ENCODE measurements at regions of chr10 and their contacts with region 1.

Region 1: DNA sequence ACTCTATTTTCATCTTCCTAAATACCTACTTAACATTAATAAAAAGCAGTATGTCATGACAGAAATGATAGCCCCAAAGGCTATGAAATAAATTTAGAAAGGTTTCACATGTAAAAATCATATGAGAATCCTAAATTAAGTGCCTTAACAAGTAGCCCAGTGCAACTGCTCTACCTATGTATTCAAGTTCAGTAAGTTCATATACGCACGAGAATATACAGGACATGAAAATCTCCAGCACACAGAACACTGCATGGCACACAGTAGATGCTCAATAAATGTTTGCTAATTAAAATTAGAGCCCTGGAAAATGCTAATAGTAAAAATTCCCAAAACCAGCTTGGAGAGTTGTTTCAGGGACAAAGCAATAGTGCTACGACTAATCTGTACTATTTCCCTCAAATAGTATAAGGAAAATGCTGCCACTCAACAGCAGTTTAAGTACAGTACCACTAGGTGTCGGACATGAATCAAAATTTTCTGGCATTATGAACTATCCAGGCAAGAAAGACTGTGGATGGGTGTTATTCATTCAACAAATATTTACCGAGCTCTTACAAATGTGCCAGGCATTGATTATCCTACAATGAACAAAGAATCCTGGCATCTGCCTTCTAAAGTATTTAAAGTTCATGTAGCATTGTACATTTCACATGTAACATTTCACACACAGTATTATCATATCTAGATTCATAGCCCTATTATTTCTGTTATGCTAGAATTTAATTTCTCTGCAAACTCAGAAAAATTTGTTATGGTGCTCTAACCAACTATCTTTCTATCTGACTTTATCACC is 80.9 kb downstream of the ARHGAP21 start:
- DNase-seq: no peak
- H3K4me3 ChIP-seq: no peak overlapping the region
- H3K27ac ChIP-seq: no peak overlapping the region
- H3K4me1 ChIP-seq: peaks cover 0 to 9% (median 0%) of the 10 kb centered on the region in 3 donors
- H3K27me3 ChIP-seq: no peaks in the 10 kb centered on the region
- CTCF ChIP-seq: peak; percentile 64 to 88 (median 74)
- POLR2A ChIP-seq: no peak

Region 2: GRCh38 chr10:24718031-24718855 is 75.4 kb after region 1 on chr10:
- intact Hi-C with region 1: loop called (anchors 10 kb)
- DNase-seq: no peak
- H3K4me3 ChIP-seq: no peak overlapping the region
- H3K27ac ChIP-seq: no peak overlapping the region
- H3K4me1 ChIP-seq: peaks cover 0 to 71% (median 29%) of the 10 kb centered on the region in 3 donors
- H3K27me3 ChIP-seq: no peaks in the 10 kb centered on the region
- CTCF ChIP-seq: no peak
- POLR2A ChIP-seq: no peak

Region 3: DNA sequence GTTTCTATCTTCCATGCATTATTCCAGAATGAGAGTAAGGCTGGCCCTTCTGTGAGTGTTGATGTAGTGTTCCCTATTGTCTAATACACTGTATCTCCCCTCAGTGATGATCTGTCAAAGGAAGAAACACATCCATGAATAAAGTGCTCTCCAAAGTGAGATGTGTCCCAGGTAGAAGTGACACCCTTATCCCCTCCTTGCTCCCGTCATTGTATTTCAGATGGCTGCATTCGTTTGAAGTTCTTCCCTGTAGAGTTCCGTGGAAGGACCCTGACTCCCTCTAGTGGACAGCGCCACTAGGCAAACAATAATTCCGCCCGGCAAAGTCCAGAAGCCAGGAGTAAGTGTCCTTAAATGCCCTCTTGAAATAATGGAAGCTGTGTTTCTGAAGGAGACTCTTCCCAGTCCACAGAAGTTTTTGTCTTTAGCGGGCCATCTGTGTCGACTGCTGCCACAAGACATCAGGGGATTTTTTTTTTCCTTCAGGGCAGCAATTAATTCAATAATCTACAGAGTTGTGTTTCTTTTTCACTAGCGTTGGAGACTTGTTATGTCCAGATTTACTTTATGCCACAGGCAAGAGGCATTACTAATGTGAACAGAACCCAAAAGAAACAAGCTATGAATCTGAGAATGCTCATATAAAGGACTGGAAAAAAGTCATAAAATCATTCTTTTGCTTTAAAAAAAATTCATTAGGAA is 438.2 kb after region 1 on chr10:
- intact Hi-C with region 1: loop called (anchors 10 kb)
- DNase-seq: no peak
- H3K4me3 ChIP-seq: no peak overlapping the region
- H3K27ac ChIP-seq: no peak overlapping the region
- H3K4me1 ChIP-seq: peaks cover 0 to 8% (median 7%) of the 10 kb centered on the region in 3 donors
- H3K27me3 ChIP-seq: no peaks in the 10 kb centered on the region
- CTCF ChIP-seq: peak; percentile 73 to 93 (median 84)
- POLR2A ChIP-seq: no peak

Measured in esophagus squamous epithelium (tissue), 5 donors.